Activated T-helper 2 cell treated with anti-CD3 and anti-CD28 coated beads, Interferon-gamma antibody, Interleukin-2, Interleukin-4, amounts not matched to agents 10 μg/mL and 5 μg/mL and 100 μg/mL, durations not matched to agents 14 hours and 24 hours and 36 hours (primary cell): ENCODE measurements at regions of chr1 and their contacts with region 1.

Region 1: DNA sequence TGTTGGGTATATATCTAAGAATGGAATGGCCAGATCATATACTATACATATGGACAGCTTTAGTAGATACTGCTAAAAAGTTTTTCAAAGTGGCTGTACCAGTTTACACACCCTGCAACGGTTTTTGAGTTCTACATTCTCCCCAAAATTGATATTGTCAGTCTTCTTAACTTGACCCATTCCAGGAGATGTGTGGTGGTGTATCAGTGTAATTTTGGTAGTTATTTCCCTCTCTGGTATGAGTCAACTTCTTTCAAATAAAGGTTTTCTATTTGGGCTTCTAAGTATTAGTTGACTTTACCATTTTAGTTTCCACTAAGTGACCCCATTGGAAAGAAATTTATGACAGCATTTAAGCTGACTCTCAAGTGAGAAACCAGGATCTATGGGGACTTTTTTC is 29.2 kb downstream of the INKA2 start:
- DNase-seq: no peak
- H3K4me3 Mint-ChIP-seq: no peak overlapping the region
- H3K27ac Mint-ChIP-seq: peak overlapping the region; percentile 63
- H3K4me1 Mint-ChIP-seq: peaks cover 27% of the 10 kb centered on the region
- H3K27me3 Mint-ChIP-seq: no peaks in the 10 kb centered on the region

Region 2: GRCh38 chr1:111648806-111649205 is 61.2 kb before region 1 on chr1:
- intact Hi-C with region 1: loop called (anchors 5 kb)
- DNase-seq: no peak
- H3K4me3 Mint-ChIP-seq: no peak overlapping the region
- H3K27ac Mint-ChIP-seq: peak overlapping the region; percentile 67
- H3K4me1 Mint-ChIP-seq: peaks cover 62% of the 10 kb centered on the region
- H3K27me3 Mint-ChIP-seq: no peaks in the 10 kb centered on the region

Region 3: GRCh38 chr1:111789666-111790316 is 79.8 kb after region 1 on chr1:
- intact Hi-C with region 1: no loop called
- DNase-seq: no peak
- H3K4me3 Mint-ChIP-seq: no peak overlapping the region
- H3K27ac Mint-ChIP-seq: no peak overlapping the region
- H3K4me1 Mint-ChIP-seq: no peaks in the 10 kb centered on the region
- H3K27me3 Mint-ChIP-seq: peaks cover 31% of the 10 kb centered on the region